Activated CD4-positive, alpha-beta memory T cell treated with anti-CD3 and anti-CD28 coated beads for 36 hours (primary cell): ENCODE measurements at regions of chr12 and their contacts with region 1.

Region 1: DNA sequence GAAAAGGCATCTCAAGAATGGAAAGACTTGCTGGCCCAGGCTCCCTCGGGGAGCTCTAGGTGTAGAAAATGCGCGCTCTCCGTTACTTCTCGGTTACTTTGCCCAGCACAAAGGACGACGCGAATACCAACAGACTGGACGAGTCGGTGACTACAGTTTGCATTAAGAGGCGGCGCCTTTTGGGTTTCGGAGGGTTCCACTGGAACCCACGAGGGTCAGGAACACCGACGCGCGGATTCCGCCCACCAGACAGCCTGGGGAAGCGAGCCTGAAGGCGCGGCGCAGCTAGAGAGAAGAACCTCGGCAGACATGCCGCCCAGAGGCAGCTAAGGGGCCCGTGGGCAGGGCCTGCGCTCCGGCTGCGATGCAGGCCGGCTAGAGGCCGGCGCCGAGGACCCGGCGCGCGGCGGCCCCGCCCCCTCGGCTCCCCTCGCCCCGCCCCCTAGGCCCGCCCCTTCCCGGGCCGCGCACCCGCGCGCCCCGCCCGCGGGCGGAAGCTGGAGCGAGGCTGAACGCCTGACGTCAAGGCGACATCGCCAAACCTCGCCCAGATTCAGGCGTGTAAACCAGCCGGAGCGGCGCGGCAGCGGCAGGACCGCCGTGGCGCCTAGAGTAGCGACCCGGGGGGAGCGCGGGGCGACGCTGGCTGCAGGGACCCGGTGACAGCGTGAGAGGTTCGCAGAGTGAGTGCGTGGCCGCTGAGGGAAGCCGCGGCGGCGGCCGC is at the start of gene RAP1B:
- DNase-seq: peak; percentile 92
- H3K4me3 Mint-ChIP-seq: peak within 1 kb of the TSS; percentile 94
- H3K27ac Mint-ChIP-seq: peak within 1 kb of the TSS; percentile 98
- H3K4me1 Mint-ChIP-seq: peaks cover 37% of the 10 kb centered on the region
- H3K27me3 Mint-ChIP-seq: no peaks in the 10 kb centered on the region
- total RNA-seq, gene RAP1B: 211 to 213 TPM

Region 2: DNA sequence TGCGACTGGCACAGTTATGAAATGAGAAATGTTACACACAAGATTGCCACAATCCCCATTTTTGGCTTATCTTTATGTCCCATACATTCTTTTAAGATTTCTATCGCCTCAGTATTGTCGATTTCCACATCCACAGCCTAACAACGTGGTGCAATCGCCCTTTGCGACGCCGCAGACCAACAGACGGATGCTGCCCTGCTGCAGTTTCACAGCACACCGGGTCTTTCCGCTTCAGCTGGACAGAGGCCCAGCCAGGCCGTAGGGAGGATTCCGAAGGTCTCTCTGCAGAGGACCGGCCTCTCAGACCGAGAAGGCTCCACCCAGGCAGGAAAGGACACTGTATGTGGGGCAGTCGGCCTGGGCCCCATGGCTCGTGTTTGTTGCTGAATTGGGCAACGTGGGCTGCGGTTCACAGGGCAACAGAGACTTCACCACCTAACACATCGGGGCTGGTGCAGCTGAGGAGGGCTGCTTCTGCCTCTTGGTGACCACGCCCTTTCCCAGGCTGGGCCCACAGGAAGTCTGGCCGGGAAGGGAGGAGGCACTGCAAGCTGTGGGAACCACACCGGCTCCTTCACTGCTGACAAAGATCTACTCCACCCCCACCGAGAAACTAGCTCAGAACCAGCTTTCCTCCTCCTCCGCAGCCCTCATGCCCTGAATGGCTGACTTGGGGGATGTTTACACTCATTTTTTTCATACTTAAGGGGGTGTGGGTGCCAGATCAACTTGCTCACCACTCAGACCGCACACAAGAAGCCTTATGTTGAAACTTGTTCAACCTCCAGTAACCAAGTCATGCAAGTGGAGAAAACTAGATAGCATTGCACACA is 245.4 kb before region 1 on chr12:
- CTCF ChIA-PET with region 1: no interaction called
- POLR2A ChIA-PET with region 1: interaction called, 16 read pairs
- intact Hi-C with region 1: loop called (anchors 2 kb)
- DNase-seq: peak; percentile 94
- H3K4me3 Mint-ChIP-seq: peak overlapping the region; percentile 79
- H3K27ac Mint-ChIP-seq: peak overlapping the region; percentile 92
- H3K4me1 Mint-ChIP-seq: peaks cover 53% of the 10 kb centered on the region
- H3K27me3 Mint-ChIP-seq: no peaks in the 10 kb centered on the region

Region 3: GRCh38 chr12:68482660-68483059 is 127.9 kb before region 1 on chr12:
- CTCF ChIA-PET with region 1: interaction called, 4 read pairs
- POLR2A ChIA-PET with region 1: interaction called, 18 read pairs
- intact Hi-C with region 1: loop called (anchors 1 kb)
- DNase-seq: peak; percentile 49
- H3K4me3 Mint-ChIP-seq: no peak overlapping the region
- H3K27ac Mint-ChIP-seq: peak overlapping the region; percentile 94
- H3K4me1 Mint-ChIP-seq: peaks cover 50% of the 10 kb centered on the region
- H3K27me3 Mint-ChIP-seq: no peaks in the 10 kb centered on the region

Region 4: DNA sequence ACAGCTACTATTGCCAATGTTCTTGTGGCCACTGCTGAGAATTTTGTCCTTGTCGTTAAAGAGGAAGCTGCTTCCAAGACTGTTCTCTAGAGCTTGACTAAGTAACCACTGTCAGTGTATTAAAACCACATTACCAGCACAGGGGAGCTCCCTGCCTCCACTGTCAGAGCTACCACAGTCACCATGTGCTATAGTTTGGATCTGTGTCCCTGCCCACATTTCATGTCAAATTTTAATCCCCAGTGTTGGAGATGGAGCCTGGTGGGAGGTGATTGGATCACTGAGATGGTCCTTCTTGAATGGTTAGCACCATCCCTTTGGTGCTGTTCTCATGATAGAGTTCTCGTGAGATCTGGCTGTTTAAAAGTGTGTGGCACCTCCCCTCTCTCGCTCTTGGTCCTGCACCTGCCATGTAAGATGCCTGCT is 23.1 kb before region 1 on chr12:
- CTCF ChIA-PET with region 1: no interaction called
- POLR2A ChIA-PET with region 1: interaction called, 20 read pairs
- intact Hi-C with region 1: loop called (anchors 1 kb)
- DNase-seq: peak; percentile 70
- H3K4me3 Mint-ChIP-seq: no peak overlapping the region
- H3K27ac Mint-ChIP-seq: peak overlapping the region; percentile 39
- H3K4me1 Mint-ChIP-seq: peaks cover 34% of the 10 kb centered on the region
- H3K27me3 Mint-ChIP-seq: no peaks in the 10 kb centered on the region

Region 5: DNA sequence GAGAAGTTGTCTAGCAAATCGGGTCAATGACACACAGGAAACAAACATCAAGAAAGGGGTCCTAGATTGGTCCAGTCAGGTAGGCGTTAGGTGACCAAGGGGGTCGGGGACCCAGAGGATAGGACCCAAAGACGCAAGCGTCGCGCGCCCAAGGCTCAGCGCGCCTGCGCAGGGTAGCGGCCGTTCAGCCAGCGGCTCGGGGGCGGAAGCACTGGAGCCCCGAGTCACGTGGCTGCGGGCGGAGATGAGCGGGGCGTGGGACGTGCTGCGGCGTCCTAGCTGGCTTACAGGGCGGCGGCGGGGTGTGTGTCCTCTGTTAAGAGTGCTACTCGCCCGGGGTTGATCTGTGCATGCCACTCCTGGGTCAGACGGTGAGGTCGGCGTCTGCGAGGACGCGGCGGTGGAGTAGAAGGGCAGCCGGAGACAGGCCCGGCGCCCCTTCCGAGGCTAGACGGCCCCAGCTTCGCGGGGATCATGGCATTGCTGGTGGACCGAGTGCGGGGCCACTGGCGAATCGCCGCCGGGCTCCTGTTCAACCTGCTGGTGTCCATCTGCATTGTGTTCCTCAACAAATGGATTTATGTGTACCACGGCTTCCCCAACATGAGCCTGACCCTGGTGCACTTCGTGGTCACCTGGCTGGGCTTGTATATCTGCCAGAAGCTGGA is 135.5 kb after region 1 on chr12 and contains the start of gene SLC35E3:
- CTCF ChIA-PET with region 1: no interaction called
- POLR2A ChIA-PET with region 1: no interaction called
- intact Hi-C with region 1: loop called (anchors 2 kb)
- DNase-seq: peak; percentile 96
- H3K4me3 Mint-ChIP-seq: peak within 1 kb of the TSS; percentile 92
- H3K27ac Mint-ChIP-seq: peak within 1 kb of the TSS; percentile 64
- H3K4me1 Mint-ChIP-seq: peaks cover 23% of the 10 kb centered on the region
- H3K27me3 Mint-ChIP-seq: no peaks in the 10 kb centered on the region
- total RNA-seq, gene SLC35E3: 4.1 to 5.3 TPM